H1 (cell line): ENCODE measurements at regions of chr12 and their contacts with region 1.

Region 1: DNA sequence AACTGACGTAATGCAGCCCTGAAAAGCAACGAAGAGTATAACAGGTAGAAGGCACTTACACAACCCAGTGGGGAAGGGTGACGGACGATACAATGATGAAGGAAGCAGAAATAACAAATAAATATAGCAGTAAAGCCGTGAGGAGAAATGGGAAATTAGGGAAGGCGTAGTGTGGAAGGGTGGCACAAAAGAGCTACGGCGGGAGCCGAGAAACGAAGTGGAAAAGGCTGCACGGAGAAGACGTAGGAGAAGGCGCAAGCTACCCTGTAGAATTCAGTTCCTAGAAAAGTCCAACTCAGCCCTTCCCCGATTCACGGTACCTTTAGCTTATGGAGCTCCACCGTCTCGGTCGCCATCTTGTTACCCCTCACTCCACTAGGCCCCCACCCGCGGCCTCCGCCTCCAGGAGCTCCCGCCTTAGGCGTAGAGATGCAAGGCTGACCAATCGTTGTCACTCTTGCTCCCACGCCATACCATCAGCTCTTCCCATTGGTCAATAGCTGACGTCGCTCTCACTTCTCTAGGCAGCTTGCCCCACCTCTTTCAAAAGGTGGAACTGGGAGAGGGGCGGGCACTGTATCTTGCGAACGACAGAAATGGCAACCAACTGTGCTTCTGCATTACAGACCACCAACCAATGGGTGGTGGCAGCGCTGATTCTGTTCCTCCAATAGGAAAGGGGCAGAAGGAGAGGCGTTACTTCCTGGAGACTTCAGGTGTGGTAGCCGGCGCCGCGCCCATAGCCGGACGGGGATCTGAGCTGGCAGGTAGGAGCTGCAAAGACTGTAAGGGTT is at the starts of genes ORMDL2 and SARNP:
- DNase-seq: peak; percentile 90 to 99
- H3K4me3 ChIP-seq: peak within 1 kb of the TSS; percentile 95 to 100 (median 96)
- H3K27ac ChIP-seq: peak within 1 kb of the TSS; percentile 91
- H3K4me1 ChIP-seq: peaks cover 4 to 8% (median 6%) of the 10 kb centered on the region in 4 experiments
- H3K27me3 ChIP-seq: no peaks in the 10 kb centered on the region
- CTCF ChIP-seq: no peak
- EP300 ChIP-seq: no peak
- POLR2A ChIP-seq: peak; percentile 62 to 93
- RAD21 ChIP-seq: no peak
- total RNA-seq, gene ORMDL2: 34.1 and 39.0 TPM in 2 replicates
- total RNA-seq, gene SARNP: 114 and 117 TPM in 2 replicates

Region 2: DNA sequence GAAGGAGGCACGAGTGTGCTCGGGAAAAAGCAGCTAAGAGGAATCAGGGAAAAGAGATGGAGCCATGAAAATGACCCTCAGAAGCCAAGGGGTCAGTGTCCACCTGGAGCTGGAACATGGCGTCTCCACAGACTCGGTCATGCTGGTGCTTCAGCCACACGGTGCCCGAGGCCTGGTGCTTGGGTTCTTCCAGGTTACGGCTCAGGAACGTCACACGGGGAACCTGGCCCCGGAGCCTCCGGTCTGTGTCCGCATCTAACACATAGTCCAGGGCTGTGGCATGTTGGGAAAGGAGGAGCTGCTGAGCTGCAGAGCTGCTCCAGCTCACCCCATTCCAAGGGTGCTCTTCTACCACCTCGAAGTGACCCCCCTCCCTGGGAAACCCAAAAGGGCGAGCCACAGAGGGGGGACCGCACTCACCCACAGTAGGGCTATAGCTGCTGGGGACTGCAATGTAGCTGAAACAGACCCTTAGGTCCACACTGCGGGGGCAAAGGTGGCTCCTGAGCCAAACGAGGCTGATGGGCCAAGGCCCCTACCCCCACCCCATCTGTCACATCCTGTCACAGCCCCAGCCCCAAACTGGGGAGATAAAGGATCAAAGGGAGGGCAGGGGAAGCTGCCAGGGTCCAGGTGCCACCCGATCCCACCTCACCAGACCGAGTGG is 120.6 kb before region 1 on chr12:
- CTCF ChIA-PET with region 1: no interaction called
- POLR2A ChIA-PET with region 1: no interaction called
- DNase-seq: no peak
- H3K4me3 ChIP-seq: no peak overlapping the region
- H3K27ac ChIP-seq: no peak overlapping the region
- H3K4me1 ChIP-seq: no peaks in the 10 kb centered on the region
- H3K27me3 ChIP-seq: no peaks in the 10 kb centered on the region
- CTCF ChIP-seq: no peak
- EP300 ChIP-seq: no peak
- POLR2A ChIP-seq: no peak
- RAD21 ChIP-seq: no peak

Region 3: GRCh38 chr12:55728939-55729823 is 88.4 kb before region 1 on chr12 and contains the start of gene CD63:
- CTCF ChIA-PET with region 1: interaction called, 5 read pairs
- POLR2A ChIA-PET with region 1: interaction called, 18 read pairs
- DNase-seq: peak in 1 of 2 experiments; percentile 85
- H3K4me3 ChIP-seq: peak within 1 kb of the TSS; percentile 54 to 93 (median 90)
- H3K27ac ChIP-seq: peak within 1 kb of the TSS; percentile 68; the same call in 1 of the 2 replicates
- H3K4me1 ChIP-seq: peaks cover 0 to 12% (median 10%) of the 10 kb centered on the region in 4 experiments; a peak in 6 of 7 replicates
- H3K27me3 ChIP-seq: no peaks in the 10 kb centered on the region
- CTCF ChIP-seq: no peak
- EP300 ChIP-seq: 0 out of 3 replicates have a peak, but pooled peaks of 1 of the 2 experiments have one; percentile 7
- POLR2A ChIP-seq: peak; percentile 57 to 74; a peak in 2 of 3 replicates
- RAD21 ChIP-seq: no peak
- total RNA-seq, gene CD63: 440 and 460 TPM in 2 replicates

Region 4: DNA sequence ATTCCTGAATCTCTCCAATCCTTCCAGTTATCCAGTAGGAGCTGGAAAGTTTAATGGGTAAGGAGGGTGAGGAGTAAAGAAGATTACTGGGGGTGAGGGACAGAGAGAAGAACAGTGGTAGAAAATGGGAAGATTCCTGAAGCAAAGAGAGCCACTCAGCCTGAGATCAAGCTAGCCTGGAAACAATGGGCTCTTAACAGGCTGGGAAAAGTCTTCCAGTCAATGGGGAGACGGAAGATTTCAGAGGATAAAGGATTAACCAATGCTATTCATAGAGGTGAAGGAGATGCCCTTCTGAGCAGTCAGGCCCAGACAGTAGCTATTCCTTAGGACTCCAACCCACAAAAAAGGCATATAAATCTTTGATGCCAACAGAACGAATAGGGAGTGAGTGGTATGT is 59.8 kb before region 1 on chr12:
- CTCF ChIA-PET with region 1: interaction called, 4 read pairs
- POLR2A ChIA-PET with region 1: interaction called, 21 read pairs
- DNase-seq: no peak
- H3K4me3 ChIP-seq: no peak overlapping the region
- H3K27ac ChIP-seq: no peak overlapping the region
- H3K4me1 ChIP-seq: no peaks in the 10 kb centered on the region
- H3K27me3 ChIP-seq: no peaks in the 10 kb centered on the region
- CTCF ChIP-seq: no peak
- EP300 ChIP-seq: no peak
- POLR2A ChIP-seq: peak in 1 of 2 experiments; percentile 50; a peak in 1 of 3 replicates
- RAD21 ChIP-seq: no peak

Region 5: DNA sequence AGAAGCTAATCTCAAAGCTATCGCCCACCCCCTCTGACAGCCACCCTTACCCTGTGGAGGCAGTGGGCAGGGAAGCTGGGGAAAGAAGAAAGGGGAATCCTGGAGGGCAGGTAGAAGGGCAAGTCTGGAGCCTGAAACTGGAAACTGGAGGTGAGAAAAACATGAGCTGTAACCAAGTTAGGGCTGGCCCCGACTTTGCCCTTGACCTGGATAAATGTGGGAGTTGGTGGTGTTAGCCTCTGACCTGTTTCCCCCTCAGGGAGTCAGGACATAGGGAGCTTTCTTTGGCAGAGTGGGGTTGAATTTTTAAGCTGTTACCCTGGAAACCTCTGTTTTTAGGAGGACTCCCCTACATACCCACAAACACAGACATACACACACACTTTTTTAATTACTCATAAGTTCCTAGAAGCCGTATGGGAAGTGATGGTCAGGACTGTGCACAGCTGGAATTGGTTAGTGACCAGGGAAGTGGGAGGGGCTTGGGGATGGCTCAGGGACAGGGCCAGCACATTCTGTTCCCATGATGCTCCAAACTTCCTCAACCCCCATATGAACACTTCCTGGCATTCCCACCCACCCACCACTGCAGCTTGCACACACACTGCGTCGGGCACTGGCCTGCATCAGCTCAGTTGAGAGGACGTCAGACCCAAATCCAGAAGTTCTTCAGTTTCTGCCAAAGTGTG is 30.2 kb after region 1 on chr12:
- CTCF ChIA-PET with region 1: interaction called, 9 read pairs
- POLR2A ChIA-PET with region 1: interaction called, 12 read pairs
- DNase-seq: no peak
- H3K4me3 ChIP-seq: no peak overlapping the region
- H3K27ac ChIP-seq: no peak overlapping the region
- H3K4me1 ChIP-seq: peaks cover 0 to 3% (median 0%) of the 10 kb centered on the region in 4 experiments; a peak in 1 of 7 replicates
- H3K27me3 ChIP-seq: no peaks in the 10 kb centered on the region
- CTCF ChIP-seq: no peak
- EP300 ChIP-seq: no peak
- POLR2A ChIP-seq: no peak
- RAD21 ChIP-seq: no peak

Region 6: GRCh38 chr12:55932551-55932910 is 115.0 kb after region 1 on chr12:
- CTCF ChIA-PET with region 1: interaction called, 13 read pairs
- POLR2A ChIA-PET with region 1: interaction called, 11 read pairs
- DNase-seq: no peak
- H3K4me3 ChIP-seq: peak overlapping the region; percentile 47 to 75 (median 66)
- H3K27ac ChIP-seq: no peak overlapping the region
- H3K4me1 ChIP-seq: peaks cover 4 to 20% (median 11%) of the 10 kb centered on the region in 4 experiments; a peak in 6 of 7 replicates
- H3K27me3 ChIP-seq: peaks cover 0 to 21% (median 14%) of the 10 kb centered on the region in 4 experiments; a peak in 6 of 7 replicates
- CTCF ChIP-seq: no peak
- EP300 ChIP-seq: no peak
- POLR2A ChIP-seq: no peak
- RAD21 ChIP-seq: no peak

Region 7: DNA sequence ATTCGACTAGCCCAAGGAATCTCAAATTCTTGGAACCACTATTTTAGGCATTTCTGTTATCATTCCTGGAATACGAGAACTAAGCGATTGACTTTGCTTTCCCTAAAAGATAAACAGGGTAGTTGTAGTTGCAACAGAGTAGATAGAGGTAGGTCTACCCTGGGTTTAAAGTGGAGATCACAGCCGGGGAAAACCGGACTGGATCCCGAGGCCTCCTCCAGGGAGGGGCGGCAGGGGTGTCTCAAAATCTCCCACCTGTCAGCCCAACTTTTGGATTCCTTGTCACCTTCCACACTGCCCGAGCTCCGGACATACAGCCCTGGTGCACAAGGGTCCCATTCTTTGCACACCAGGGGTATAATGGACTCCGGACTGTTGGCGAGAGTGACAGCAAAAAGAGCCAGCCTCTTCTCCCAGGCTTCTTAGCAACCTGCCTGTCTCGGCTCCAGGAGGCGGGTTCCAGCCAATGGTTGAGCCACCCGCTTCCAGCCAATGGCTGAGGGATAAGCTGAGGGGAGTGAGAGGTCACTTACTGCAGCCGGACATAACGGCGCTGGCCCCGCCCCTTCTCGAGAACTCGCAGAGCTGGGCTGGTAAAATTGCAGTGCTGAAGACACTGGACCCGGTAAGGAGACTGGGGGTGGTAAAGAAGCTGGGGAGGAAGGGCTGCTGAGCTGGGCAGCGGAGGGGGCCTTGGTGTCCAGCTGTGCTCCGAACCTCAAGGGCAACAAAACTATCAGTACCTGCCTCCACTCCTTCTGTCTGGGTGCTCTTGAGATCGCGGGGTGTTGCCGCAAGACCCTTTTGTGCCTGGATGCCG is 179.4 kb after region 1 on chr12 and contains the start of gene SUOX:
- CTCF ChIA-PET with region 1: no interaction called
- POLR2A ChIA-PET with region 1: no interaction called
- DNase-seq: peak; percentile 90 to 94
- H3K4me3 ChIP-seq: peak within 1 kb of the TSS; percentile 77 to 97 (median 89)
- H3K27ac ChIP-seq: peak within 1 kb of the TSS; percentile 72
- H3K4me1 ChIP-seq: peaks cover 0 to 4% (median 0%) of the 10 kb centered on the region in 4 experiments; a peak in 2 of 7 replicates
- H3K27me3 ChIP-seq: no peaks in the 10 kb centered on the region
- CTCF ChIP-seq: no peak
- EP300 ChIP-seq: no peak
- POLR2A ChIP-seq: peak in 1 of 2 experiments; percentile 80; a peak in 2 of 3 replicates
- RAD21 ChIP-seq: no peak
- total RNA-seq, gene SUOX: 22.5 and 23.1 TPM in 2 replicates